Naive thymus-derived CD8-positive, alpha-beta T cell (primary cell): ENCODE measurements at regions of chr12 and their contacts with region 1.

Region 1: GRCh38 chr12:121811434-121812319 is 7.9 kb downstream of the SETD1B start:
- DNase-seq: peak; percentile 52 to 85 (median 75)
- ATAC-seq: peak; percentile 67 to 78
- H3K4me3 Mint-ChIP-seq: peak overlapping the region; percentile 72 to 94 (median 86)
- H3K27ac Mint-ChIP-seq: peak overlapping the region in 9 of 10 donors; percentile 31 to 94 (median 86)
- H3K4me1 Mint-ChIP-seq: peaks cover 23 to 74% (median 62%) of the 10 kb centered on the region in 4 donors
- H3K27me3 Mint-ChIP-seq: no peaks in the 10 kb centered on the region

Region 2: DNA sequence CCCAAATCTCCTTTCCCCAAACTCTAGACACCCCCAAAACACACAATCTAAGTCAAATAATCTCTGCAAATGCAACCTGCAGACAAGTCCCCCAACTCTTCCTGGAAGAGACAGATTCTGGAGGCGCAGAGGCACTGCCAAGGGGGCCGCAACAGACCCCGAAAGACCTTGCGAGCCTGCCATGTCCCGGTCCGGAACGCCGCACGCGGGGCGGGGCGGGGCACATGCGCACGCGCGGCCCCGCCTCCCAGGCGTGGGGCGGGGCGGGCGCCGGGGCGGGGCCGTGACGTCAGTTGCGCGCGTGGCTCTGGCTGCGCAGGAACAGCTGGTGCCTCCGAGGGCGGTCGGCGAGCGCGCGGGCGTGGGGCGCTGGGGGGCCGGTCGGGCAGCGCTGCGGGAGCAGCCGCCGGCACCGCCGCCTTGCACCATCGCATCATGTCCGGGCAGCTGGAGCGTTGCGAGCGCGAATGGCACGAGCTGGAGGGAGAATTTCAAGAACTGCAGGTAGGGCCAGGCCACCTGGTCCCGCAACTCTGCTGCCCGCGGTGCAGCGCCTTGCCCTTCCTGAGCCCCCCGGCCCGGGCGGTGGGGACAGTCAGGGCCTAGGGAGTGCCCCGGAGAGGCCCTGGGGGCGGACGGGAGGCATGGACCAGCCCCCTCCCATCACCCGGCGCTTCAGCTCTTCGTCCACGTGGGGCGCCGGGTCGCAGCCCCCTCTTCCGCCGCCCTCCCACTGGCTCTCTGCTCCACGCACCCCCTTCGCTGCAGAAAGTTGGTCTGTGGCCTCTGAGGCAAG is 99.0 kb before region 1 on chr12 and contains the start of gene TMEM120B:
- POLR2A ChIA-PET with region 1: interaction called, 13 read pairs
- DNase-seq: peak; percentile 73 to 92 (median 84)
- ATAC-seq: peak; percentile 82 to 85
- H3K4me3 Mint-ChIP-seq: peak within 1 kb of the TSS; percentile 84 to 98 (median 94)
- H3K27ac Mint-ChIP-seq: peak within 1 kb of the TSS; percentile 82 to 98 (median 94)
- H3K4me1 Mint-ChIP-seq: peaks cover 8 to 49% (median 34%) of the 10 kb centered on the region in 4 donors
- H3K27me3 Mint-ChIP-seq: no peaks in the 10 kb centered on the region
- polyA plus RNA-seq, gene TMEM120B: 2.1 to 2.5 (median 2.4) TPM

Region 3: DNA sequence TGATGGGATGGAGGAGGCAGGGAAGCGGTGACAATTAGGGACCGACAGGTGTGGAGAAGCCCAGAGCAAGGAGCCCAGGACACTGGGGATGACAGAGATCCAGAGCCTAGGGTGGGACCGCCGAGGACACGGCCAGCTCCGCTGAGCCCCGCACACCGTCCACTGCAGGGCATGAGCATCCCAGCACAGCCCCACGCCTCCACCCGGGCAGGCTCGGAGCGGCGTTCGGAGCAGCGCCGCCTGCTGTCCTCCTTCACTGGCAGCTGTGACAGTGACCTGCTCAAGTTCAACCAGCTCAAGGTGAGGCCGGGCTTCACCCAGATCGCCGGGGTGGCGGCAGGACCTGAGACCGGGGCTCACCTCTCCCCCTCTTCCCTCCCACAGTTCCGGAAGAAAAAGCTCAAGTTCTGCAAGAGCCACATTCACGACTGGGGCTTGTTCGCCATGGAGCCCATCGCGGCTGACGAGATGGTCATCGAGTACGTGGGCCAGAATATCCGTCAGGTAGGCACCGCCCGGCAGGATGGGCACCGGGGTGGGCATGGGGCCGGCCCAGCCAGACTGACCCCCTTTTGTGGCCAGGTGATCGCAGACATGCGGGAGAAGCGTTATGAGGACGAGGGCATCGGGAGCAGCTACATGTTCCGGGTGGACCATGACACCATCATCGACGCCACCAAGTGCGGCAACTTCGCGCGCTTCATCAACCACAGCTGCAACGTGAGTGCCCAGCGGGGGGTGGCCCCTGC is 15.8 kb after region 1 on chr12:
- POLR2A ChIA-PET with region 1: interaction called, 27 read pairs
- DNase-seq: no peak
- ATAC-seq: no peak
- H3K4me3 Mint-ChIP-seq: no peak overlapping the region
- H3K27ac Mint-ChIP-seq: peak overlapping the region in 4 of 10 donors; percentile 34 to 87 (median 70)
- H3K4me1 Mint-ChIP-seq: peaks cover 0 to 22% (median 17%) of the 10 kb centered on the region in 4 donors
- H3K27me3 Mint-ChIP-seq: no peaks in the 10 kb centered on the region

Region 4: GRCh38 chr12:121839106-121839992 is 27.7 kb after region 1 on chr12:
- POLR2A ChIA-PET with region 1: interaction called, 13 read pairs
- DNase-seq: peak; percentile 98 to 100 (median 100)
- ATAC-seq: peak; percentile 96
- H3K4me3 Mint-ChIP-seq: peak overlapping the region; percentile 96 to 100 (median 97)
- H3K27ac Mint-ChIP-seq: peak overlapping the region; percentile 85 to 96 (median 94)
- H3K4me1 Mint-ChIP-seq: peaks cover 5 to 23% (median 19%) of the 10 kb centered on the region in 4 donors
- H3K27me3 Mint-ChIP-seq: no peaks in the 10 kb centered on the region

Region 5: GRCh38 chr12:121888478-121889266 is 77.0 kb after region 1 on chr12 and contains the start of gene PSMD9:
- POLR2A ChIA-PET with region 1: interaction called, 49 read pairs
- DNase-seq: peak; percentile 95 to 99 (median 98)
- ATAC-seq: peak; percentile 93
- H3K4me3 Mint-ChIP-seq: peak within 1 kb of the TSS; percentile 96 to 100 (median 98)
- H3K27ac Mint-ChIP-seq: peak within 1 kb of the TSS; percentile 94 to 100 (median 99)
- H3K4me1 Mint-ChIP-seq: peaks cover 14 to 43% (median 35%) of the 10 kb centered on the region in 4 donors
- H3K27me3 Mint-ChIP-seq: peaks cover 0 to 3% (median 0%) of the 10 kb centered on the region in 5 donors
- polyA plus RNA-seq, gene PSMD9: 88.4 to 90.5 (median 89.4) TPM